ENCODE measurements at regions of chrX and their contacts with region 1.

Region 1: GRCh38 chrX:40539214-40540142 is 41.3 kb upstream of the ATP6AP2 start:
- DNase-seq: no peak
- H3K4me3 ChIP-seq: no peak overlapping the region
- H3K27ac ChIP-seq: no peak overlapping the region
- H3K4me1 ChIP-seq: peaks cover 6% of the 10 kb centered on the region
- H3K27me3 ChIP-seq: peaks cover 5 to 19% of the 10 kb centered on the region in 2 experiments
- CTCF ChIP-seq: no peak
- POLR2A ChIP-seq: no peak

Region 2: DNA sequence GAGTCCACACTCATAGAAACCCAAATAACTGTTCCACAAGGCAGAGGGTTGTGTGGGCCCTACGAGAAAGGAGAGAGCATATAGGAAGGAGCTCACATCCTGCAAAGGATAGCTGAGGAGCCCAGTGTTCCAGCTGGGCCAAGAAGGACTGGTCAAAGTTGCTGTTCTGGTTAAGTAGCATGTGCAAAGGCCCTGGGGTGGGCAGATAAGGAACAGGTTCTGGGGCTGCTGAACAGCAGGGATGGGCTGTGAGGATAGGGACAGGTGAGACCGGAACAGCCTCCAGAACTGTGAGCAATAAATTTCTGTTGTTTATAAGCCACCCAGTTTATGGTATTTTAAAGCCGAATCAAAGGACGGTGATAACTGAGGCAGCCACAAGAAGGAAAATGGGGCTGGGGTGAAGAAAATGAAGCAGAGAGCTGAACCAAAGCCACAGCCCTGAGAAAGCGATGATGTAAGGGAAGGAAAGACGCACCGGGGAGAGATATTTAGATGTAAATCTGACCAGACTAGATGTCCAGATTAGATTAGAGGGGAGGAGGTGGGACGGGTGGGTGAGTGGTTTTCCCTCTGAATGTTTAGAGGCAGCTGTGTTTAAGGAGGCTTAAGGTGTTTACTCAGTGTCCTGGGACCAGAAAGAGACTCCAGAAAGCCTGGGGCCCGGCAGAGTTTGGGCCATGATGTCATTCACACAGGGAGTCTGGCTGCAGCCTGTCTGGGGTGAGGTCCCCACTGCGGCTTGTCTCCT is 261.0 kb before region 1 on chrX:
- CTCF ChIA-PET with region 1: no interaction called
- POLR2A ChIA-PET with region 1: no interaction called
- dilution Hi-C with region 1: no loop called
- intact Hi-C with region 1: loop called (anchors 5 kb)
- DNase-seq: no peak
- H3K4me3 ChIP-seq: no peak overlapping the region
- H3K27ac ChIP-seq: no peak overlapping the region
- H3K4me1 ChIP-seq: peaks cover 2% of the 10 kb centered on the region
- H3K27me3 ChIP-seq: no peaks in the 10 kb centered on the region
- CTCF ChIP-seq: no peak
- POLR2A ChIP-seq: no peak

Region 3: GRCh38 chrX:40573763-40574162 is 34.3 kb after region 1 on chrX:
- CTCF ChIA-PET with region 1: interaction called, 12 read pairs
- POLR2A ChIA-PET with region 1: no interaction called
- dilution Hi-C with region 1: no loop called
- intact Hi-C with region 1: no loop called
- DNase-seq: peak; percentile 25
- H3K4me3 ChIP-seq: no peak overlapping the region
- H3K27ac ChIP-seq: no peak overlapping the region
- H3K4me1 ChIP-seq: no peaks in the 10 kb centered on the region
- H3K27me3 ChIP-seq: no peaks in the 10 kb centered on the region
- CTCF ChIP-seq: peak; percentile 28 to 49
- POLR2A ChIP-seq: no peak

Region 4: GRCh38 chrX:40647307-40648197 is 108.1 kb after region 1 on chrX and contains the start of gene CXorf38:
- CTCF ChIA-PET with region 1: interaction called, 22 read pairs
- POLR2A ChIA-PET with region 1: no interaction called
- dilution Hi-C with region 1: no loop called
- intact Hi-C with region 1: loop called (anchors 1 kb)
- DNase-seq: peak; percentile 90
- H3K4me3 ChIP-seq: peak within 1 kb of the TSS; percentile 78 to 82 (median 81)
- H3K27ac ChIP-seq: peak within 1 kb of the TSS; percentile 64
- H3K4me1 ChIP-seq: peaks cover 21% of the 10 kb centered on the region
- H3K27me3 ChIP-seq: no peaks in the 10 kb centered on the region
- CTCF ChIP-seq: no peak
- POLR2A ChIP-seq: peak; percentile 83
- total RNA-seq, gene CXorf38: 12.1 and 12.4 TPM in 2 replicates

Region 5: DNA sequence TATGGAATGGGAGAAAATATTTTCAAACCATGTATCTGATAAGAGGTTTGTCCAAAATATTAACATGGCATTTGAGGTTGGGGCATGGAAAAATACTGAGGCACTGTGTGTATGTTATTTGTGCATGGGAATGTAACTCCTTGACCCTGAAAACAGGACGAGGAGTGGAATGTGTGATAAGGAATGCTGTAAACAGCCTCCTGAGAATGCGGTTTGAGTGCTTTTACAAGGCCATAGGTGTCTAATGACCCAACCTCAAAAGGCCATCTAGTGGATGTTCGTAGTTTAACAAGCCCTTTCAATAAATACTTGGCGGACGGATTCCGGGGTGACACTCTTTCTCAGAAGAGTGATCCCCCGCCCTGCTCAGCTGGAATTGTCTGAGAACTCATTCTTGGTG is 382.8 kb after region 1 on chrX:
- CTCF ChIA-PET with region 1: interaction called, 3 read pairs
- POLR2A ChIA-PET with region 1: no interaction called
- dilution Hi-C with region 1: no loop called
- intact Hi-C with region 1: loop called (anchors 1 kb)
- DNase-seq: peak; percentile 76
- H3K4me3 ChIP-seq: no peak overlapping the region
- H3K27ac ChIP-seq: no peak overlapping the region
- H3K4me1 ChIP-seq: peaks cover 4% of the 10 kb centered on the region
- H3K27me3 ChIP-seq: no peaks in the 10 kb centered on the region
- CTCF ChIP-seq: peak; percentile 12 to 20
- POLR2A ChIP-seq: no peak